CD8-positive, alpha-beta T cell (primary cell): ENCODE measurements at regions of chr3 and their contacts with region 1.

Region 1: GRCh38 chr3:70064194-70064779 is 64.8 kb downstream of the SAMMSON start:
- DNase-seq: peak in 3 of 9 experiments; percentile 5 to 31 (median 17)
- ATAC-seq: no peak
- H3K4me3 ChIP-seq: no peak overlapping the region
- H3K4me3 Mint-ChIP-seq: no peak overlapping the region
- H3K27ac ChIP-seq: no peak overlapping the region
- H3K27ac Mint-ChIP-seq: no peak overlapping the region
- H3K4me1 ChIP-seq: no peaks in the 10 kb centered on the region
- H3K4me1 Mint-ChIP-seq: no peaks in the 10 kb centered on the region
- H3K27me3 ChIP-seq: no peaks in the 10 kb centered on the region
- H3K27me3 Mint-ChIP-seq: peaks cover 2% of the 10 kb centered on the region
- CTCF ChIP-seq: peak; percentile 48

Region 2: DNA sequence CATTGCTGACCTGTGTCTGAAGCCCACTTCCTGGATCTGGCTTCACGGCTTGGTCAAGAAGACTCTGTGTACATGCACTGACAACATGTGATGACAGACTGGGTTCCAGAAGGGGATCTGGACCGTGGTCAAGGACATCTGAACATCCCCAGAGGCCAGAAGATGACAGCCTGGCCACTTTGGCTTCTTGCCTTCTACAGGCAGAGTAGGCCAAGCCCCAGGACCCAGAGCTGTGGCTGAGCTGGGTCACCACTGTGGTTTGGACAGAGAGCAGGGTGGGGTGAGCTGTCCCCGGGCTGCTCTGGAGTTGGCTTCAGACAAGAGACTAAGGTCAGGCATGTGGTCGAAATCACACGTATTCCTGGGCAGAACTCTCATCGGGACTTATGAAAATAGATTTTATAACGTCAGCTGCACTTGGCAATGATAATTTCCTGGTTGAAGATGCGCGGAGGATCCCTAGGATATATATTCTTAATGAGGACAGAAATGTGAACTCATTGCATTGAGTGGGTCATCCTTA is 564.3 kb before region 1 on chr3:
- CTCF ChIA-PET with region 1: no interaction called
- POLR2A ChIA-PET with region 1: no interaction called
- intact Hi-C with region 1: no loop called
- DNase-seq: no peak
- ATAC-seq: no peak
- H3K4me3 ChIP-seq: no peak overlapping the region
- H3K4me3 Mint-ChIP-seq: no peak overlapping the region
- H3K27ac ChIP-seq: no peak overlapping the region
- H3K27ac Mint-ChIP-seq: no peak overlapping the region
- H3K4me1 ChIP-seq: no peaks in the 10 kb centered on the region
- H3K4me1 Mint-ChIP-seq: no peaks in the 10 kb centered on the region
- H3K27me3 ChIP-seq: peaks cover 0 to 2% of the 10 kb centered on the region in 2 experiments
- H3K27me3 Mint-ChIP-seq: peaks cover 8% of the 10 kb centered on the region
- CTCF ChIP-seq: no peak

Region 3: DNA sequence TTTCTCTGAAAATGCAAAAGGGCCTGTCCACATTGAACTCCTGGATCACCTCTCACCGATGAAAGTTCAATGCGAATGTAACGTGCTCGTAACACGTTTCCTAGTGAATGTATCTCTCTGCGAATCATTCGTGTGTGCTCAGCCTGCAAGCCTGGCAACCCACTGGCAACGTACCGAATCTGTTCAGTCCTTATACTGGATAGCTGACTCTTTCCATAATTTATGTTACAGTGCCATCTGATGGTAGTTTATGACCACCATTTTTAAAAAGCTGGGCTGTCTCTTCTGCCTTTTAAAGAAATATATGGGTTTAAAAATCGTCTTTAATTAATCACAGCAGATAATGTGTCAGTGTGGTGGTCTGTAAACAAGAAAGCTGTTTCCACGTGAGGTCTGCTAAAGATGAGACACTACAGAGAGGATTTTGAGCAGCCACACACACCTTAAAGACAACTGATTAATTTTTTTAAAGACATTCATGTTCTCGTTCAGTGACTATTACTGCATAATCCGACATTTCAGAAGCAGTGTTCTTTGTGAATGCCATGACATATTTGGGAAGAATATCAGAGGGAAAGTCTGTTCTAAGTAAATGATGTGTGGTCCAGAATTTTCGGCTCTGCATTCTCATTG is 1588.6 kb after region 1 on chr3:
- CTCF ChIA-PET with region 1: no interaction called
- POLR2A ChIA-PET with region 1: no interaction called
- intact Hi-C with region 1: loop called in 1 of 2 experiments (anchors 1 kb)
- DNase-seq: peak in 2 of 9 experiments; percentile 17 to 47
- ATAC-seq: no peak
- H3K4me3 ChIP-seq: no peak overlapping the region
- H3K4me3 Mint-ChIP-seq: no peak overlapping the region
- H3K27ac ChIP-seq: no peak overlapping the region
- H3K27ac Mint-ChIP-seq: no peak overlapping the region
- H3K4me1 ChIP-seq: no peaks in the 10 kb centered on the region
- H3K4me1 Mint-ChIP-seq: peaks cover 2% of the 10 kb centered on the region
- H3K27me3 ChIP-seq: no peaks in the 10 kb centered on the region
- H3K27me3 Mint-ChIP-seq: no peaks in the 10 kb centered on the region
- CTCF ChIP-seq: peak; percentile 21

Region 4: GRCh38 chr3:71681224-71681668 is 1617.0 kb after region 1 on chr3:
- CTCF ChIA-PET with region 1: no interaction called
- POLR2A ChIA-PET with region 1: no interaction called
- intact Hi-C with region 1: loop called in 1 of 2 experiments (anchors 1 kb)
- DNase-seq: peak in 6 of 9 experiments; percentile 10 to 50 (median 31)
- ATAC-seq: peak; percentile 29
- H3K4me3 ChIP-seq: no peak overlapping the region
- H3K4me3 Mint-ChIP-seq: no peak overlapping the region
- H3K27ac ChIP-seq: no peak overlapping the region
- H3K27ac Mint-ChIP-seq: peak overlapping the region; percentile 18
- H3K4me1 ChIP-seq: no peaks in the 10 kb centered on the region
- H3K4me1 Mint-ChIP-seq: peaks cover 10% of the 10 kb centered on the region
- H3K27me3 ChIP-seq: no peaks in the 10 kb centered on the region
- H3K27me3 Mint-ChIP-seq: no peaks in the 10 kb centered on the region
- CTCF ChIP-seq: peak; percentile 47